Naive thymus-derived CD4-positive, alpha-beta T cell (primary cell): ENCODE measurements at regions of chr5 and their contacts with region 1.

Region 1: DNA sequence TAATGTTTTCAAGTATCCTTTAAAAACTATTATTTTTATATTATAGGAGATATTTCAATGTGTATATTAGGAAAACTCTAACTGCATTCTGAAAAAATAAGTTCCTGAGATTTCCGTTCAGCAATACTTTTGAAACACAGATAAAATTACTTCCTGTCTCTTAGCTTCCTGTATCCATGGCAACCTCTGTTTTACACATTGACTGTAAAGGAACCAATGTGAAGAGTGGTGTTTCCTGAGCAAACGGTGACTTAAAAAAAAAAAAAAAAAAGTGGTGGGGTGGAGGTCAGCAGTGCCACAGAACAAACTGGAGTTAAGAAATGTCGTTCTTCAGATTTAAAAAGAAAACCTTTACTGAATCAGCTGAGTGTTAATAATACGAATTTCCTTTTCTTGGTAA is at the start of gene LRRC70:
- DNase-seq: peak in 7 of 9 donors; percentile 66 to 88 (median 83)
- ATAC-seq: peak; percentile 95
- H3K4me3 ChIP-seq: no peak within 1 kb of the TSS
- H3K4me3 Mint-ChIP-seq: peak within 1 kb of the TSS; percentile 46 to 91 (median 78)
- H3K27ac ChIP-seq: peak within 1 kb of the TSS; percentile 64
- H3K27ac Mint-ChIP-seq: peak within 1 kb of the TSS; percentile 72 to 97 (median 85)
- H3K4me1 ChIP-seq: peaks cover 6 to 11% of the 10 kb centered on the region in 2 donors
- H3K4me1 Mint-ChIP-seq: peaks cover 17 to 71% (median 41%) of the 10 kb centered on the region in 7 donors
- H3K27me3 ChIP-seq: no peaks in the 10 kb centered on the region
- H3K27me3 Mint-ChIP-seq: no peaks in the 10 kb centered on the region
- total RNA-seq, gene LRRC70: 0.89 to 13.0 (median 2.1) TPM

Region 2: DNA sequence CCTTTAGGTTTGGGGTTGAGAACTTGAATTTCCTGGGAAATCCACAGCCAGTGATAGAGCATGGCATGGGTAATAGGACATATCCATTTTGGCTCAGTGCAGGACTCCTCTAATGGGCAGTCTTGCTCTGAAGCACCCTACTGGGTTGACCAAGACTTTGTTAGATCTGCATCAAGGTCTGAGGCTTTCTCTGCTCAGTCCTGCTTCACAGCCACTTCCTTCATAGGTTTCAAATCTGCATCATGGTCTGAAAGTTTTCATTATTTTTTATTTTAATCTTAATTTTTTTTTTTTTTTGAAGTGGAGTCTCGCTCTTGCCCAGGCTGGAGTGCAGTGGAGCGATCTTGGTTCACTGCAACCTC is 236.1 kb before region 1 on chr5:
- CTCF ChIA-PET with region 1: no interaction called
- POLR2A ChIA-PET with region 1: no interaction called
- intact Hi-C with region 1: no loop called
- DNase-seq: no peak
- ATAC-seq: peak; percentile 23
- H3K4me3 ChIP-seq: no peak overlapping the region
- H3K4me3 Mint-ChIP-seq: peak overlapping the region in 9 of 10 donors; percentile 53 to 83 (median 69)
- H3K27ac ChIP-seq: no peak overlapping the region
- H3K27ac Mint-ChIP-seq: peak overlapping the region in 7 of 9 donors; percentile 61 to 88 (median 85)
- H3K4me1 ChIP-seq: peaks cover 16 to 25% of the 10 kb centered on the region in 2 donors
- H3K4me1 Mint-ChIP-seq: peaks cover 23 to 69% (median 61%) of the 10 kb centered on the region in 7 donors
- H3K27me3 ChIP-seq: no peaks in the 10 kb centered on the region
- H3K27me3 Mint-ChIP-seq: no peaks in the 10 kb centered on the region

Region 3: GRCh38 chr5:62403434-62404250 is 174.9 kb before region 1 on chr5 and contains the start of gene DIMT1:
- CTCF ChIA-PET with region 1: no interaction called
- POLR2A ChIA-PET with region 1: interaction called, 3 read pairs
- intact Hi-C with region 1: loop called in 1 of 2 experiments (anchors 1 kb)
- DNase-seq: peak; percentile 79 to 92 (median 90)
- ATAC-seq: peak; percentile 99
- H3K4me3 ChIP-seq: peak within 1 kb of the TSS; percentile 99
- H3K4me3 Mint-ChIP-seq: peak within 1 kb of the TSS; percentile 93 to 100 (median 98)
- H3K27ac ChIP-seq: peak within 1 kb of the TSS; percentile 89
- H3K27ac Mint-ChIP-seq: peak within 1 kb of the TSS; percentile 87 to 98 (median 94)
- H3K4me1 ChIP-seq: peaks cover 12 to 13% of the 10 kb centered on the region in 2 donors
- H3K4me1 Mint-ChIP-seq: peaks cover 21 to 38% (median 35%) of the 10 kb centered on the region in 7 donors
- H3K27me3 ChIP-seq: no peaks in the 10 kb centered on the region
- H3K27me3 Mint-ChIP-seq: no peaks in the 10 kb centered on the region
- total RNA-seq, gene DIMT1: 18.3 to 28.8 (median 21.3) TPM

Region 4: GRCh38 chr5:62603891-62604290 is 25.4 kb after region 1 on chr5:
- CTCF ChIA-PET with region 1: no interaction called
- POLR2A ChIA-PET with region 1: interaction called, 3 read pairs
- intact Hi-C with region 1: loop called in 1 of 2 experiments (anchors 2 kb)
- DNase-seq: no peak
- ATAC-seq: no peak
- H3K4me3 ChIP-seq: no peak overlapping the region
- H3K4me3 Mint-ChIP-seq: no peak overlapping the region
- H3K27ac ChIP-seq: no peak overlapping the region
- H3K27ac Mint-ChIP-seq: no peak overlapping the region
- H3K4me1 ChIP-seq: no peaks in the 10 kb centered on the region
- H3K4me1 Mint-ChIP-seq: peaks cover 4 to 37% (median 12%) of the 10 kb centered on the region in 7 donors
- H3K27me3 ChIP-seq: no peaks in the 10 kb centered on the region
- H3K27me3 Mint-ChIP-seq: no peaks in the 10 kb centered on the region